AG04450 (cell line): ENCODE measurements at regions of chr9 and their contacts with region 1.

Region 1: DNA sequence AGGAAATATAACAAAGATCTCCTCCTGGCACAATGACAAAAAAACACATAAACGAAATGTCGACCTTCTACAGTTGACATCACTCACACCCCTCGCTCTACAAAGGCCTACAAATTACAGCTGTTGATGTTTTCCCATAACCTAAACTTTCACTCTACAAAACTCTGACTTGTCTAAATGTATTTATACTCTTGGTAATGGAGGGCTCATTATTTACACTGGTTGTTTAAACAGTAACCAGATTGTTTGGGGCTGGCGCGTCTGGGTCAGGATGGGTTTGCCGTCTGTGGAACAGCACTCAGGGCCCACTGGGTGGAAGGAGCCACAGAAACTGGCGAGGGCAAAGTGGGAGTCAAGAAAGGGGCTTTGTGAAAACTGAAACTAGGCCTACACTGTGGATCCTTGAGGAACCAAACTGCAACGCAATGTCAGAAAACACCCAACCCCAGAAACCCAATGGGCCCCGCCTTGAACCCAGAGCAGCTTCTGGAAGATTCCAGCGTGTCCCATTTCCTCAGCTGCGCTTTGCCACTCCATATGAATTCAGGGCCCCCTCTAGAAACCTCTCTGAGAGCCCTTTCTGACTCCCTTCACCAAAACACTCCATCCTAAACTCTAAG is 136.7 kb downstream of the ROR2 start:
- DNase-seq: no peak
- H3K4me3 ChIP-seq: no peak overlapping the region
- H3K27ac ChIP-seq: peak overlapping the region; percentile 57
- H3K27me3 ChIP-seq: peaks cover 2% of the 10 kb centered on the region
- CTCF ChIP-seq: no peak

Region 2: DNA sequence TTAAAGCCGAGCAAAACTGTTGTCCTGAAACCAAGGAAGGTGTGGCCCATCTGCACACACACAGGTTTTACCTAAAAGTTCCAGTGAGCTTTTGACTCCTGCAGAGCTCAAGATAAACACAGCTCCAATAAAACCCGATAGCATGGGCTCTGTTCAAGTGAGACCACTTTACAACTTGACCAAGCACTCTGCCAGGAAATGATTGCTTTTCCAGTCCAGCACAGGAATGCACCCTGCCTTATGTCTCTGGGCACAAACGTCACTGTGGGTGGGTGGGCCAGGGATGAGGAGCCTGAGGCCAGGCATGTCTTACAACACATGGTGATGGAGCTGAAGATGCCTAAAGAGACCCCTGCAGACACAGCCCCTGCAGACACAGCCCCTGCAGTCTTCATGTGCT is 21.5 kb after region 1 on chr9:
- CTCF ChIA-PET with region 1: interaction called, 10 read pairs
- POLR2A ChIA-PET with region 1: no interaction called
- DNase-seq: no peak
- H3K4me3 ChIP-seq: no peak overlapping the region
- H3K27ac ChIP-seq: no peak overlapping the region
- H3K27me3 ChIP-seq: peaks cover 9% of the 10 kb centered on the region
- CTCF ChIP-seq: no peak